Breast epithelium (tissue), 4 donors: ENCODE measurements at regions of chr7 and their contacts with region 1.

Region 1: GRCh38 chr7:31744294-31744874 is 57.4 kb downstream of the PPP1R17 start:
- DNase-seq: peak; percentile 55 to 63
- H3K4me3 ChIP-seq: no peak overlapping the region
- H3K27ac ChIP-seq: no peak overlapping the region
- H3K4me1 ChIP-seq: no peaks in the 10 kb centered on the region
- H3K27me3 ChIP-seq: no peaks in the 10 kb centered on the region
- CTCF ChIP-seq: peak; percentile 70 to 92 (median 82)
- POLR2A ChIP-seq: no peak

Region 2: DNA sequence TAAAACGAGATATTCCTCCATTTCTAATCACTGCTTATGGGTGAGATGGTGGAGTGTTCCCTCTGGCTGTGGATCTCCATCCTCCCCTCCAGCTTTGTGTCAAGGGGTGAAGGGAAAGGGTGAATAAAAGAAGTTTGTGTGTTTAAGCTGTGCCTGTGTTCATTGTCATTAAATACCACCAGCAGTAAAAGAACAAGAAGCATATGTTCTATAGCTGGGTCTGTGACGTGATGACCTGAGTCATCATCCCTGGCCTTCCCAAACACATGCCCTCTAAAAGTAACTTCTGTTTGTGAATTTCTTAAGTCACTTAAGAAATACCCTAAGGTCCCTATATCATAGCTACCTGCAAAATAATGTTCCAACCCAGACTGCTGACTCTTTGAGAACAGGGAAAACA is 47.5 kb after region 1 on chr7:
- intact Hi-C with region 1: no loop called
- DNase-seq: no peak
- H3K4me3 ChIP-seq: no peak overlapping the region
- H3K27ac ChIP-seq: no peak overlapping the region
- H3K4me1 ChIP-seq: no peaks in the 10 kb centered on the region
- H3K27me3 ChIP-seq: no peaks in the 10 kb centered on the region
- CTCF ChIP-seq: no peak
- POLR2A ChIP-seq: no peak

Region 3: GRCh38 chr7:32204361-32205018 is 460.1 kb after region 1 on chr7:
- intact Hi-C with region 1: loop called (anchors 10 kb)
- DNase-seq: peak in 1 of 2 donors; percentile 73
- H3K4me3 ChIP-seq: peak overlapping the region; percentile 24 to 54 (median 25)
- H3K27ac ChIP-seq: no peak overlapping the region
- H3K4me1 ChIP-seq: no peaks in the 10 kb centered on the region
- H3K27me3 ChIP-seq: no peaks in the 10 kb centered on the region
- CTCF ChIP-seq: peak; percentile 69 to 91 (median 74)
- POLR2A ChIP-seq: no peak